Activated T-helper 2 cell treated with anti-CD3 and anti-CD28 coated beads, Interferon-gamma antibody, Interleukin-2, Interleukin-4, amounts not matched to agents 10 μg/mL and 5 μg/mL and 100 μg/mL, durations not matched to agents 14 hours and 24 hours and 36 hours (primary cell): ENCODE measurements at regions of chr12 and their contacts with region 1.

Region 1: GRCh38 chr12:44015335-44015941 is 179.6 kb downstream of the TMEM117 start:
- DNase-seq: no peak
- H3K4me3 Mint-ChIP-seq: no peak overlapping the region
- H3K27ac Mint-ChIP-seq: no peak overlapping the region
- H3K4me1 Mint-ChIP-seq: no peaks in the 10 kb centered on the region
- H3K27me3 Mint-ChIP-seq: no peaks in the 10 kb centered on the region

Region 2: DNA sequence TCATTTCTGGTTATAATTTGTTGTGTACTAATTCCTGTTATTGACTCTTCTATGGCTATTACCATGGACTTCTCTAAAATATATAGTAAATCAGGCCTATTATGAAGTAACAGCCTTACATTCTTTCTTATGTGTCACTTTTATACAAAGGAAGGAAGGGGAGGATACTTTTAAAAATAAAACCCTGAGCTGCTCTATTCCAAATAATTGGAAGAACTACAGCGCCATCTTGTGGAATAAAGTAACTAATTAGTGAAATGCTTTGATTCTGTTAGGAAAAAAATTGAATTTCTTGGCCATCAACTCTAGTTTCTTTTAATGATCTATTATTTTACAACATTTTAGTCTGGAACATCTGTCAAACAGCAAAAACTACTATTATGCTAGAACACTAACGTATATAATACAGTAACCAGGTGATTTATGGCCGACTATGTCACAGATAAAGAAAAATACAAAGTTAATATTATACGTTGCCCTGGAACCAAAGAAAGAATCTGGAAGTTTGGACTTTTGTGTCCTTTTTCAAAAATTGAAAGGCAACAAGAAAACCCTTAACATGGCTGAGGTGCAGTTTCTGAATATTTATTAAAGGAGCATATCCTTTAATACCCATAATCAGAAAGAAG is 915.6 kb after region 1 on chr12:
- intact Hi-C with region 1: loop called (anchors 5 kb)
- DNase-seq: no peak
- H3K4me3 Mint-ChIP-seq: no peak overlapping the region
- H3K27ac Mint-ChIP-seq: no peak overlapping the region
- H3K4me1 Mint-ChIP-seq: peaks cover 1% of the 10 kb centered on the region
- H3K27me3 Mint-ChIP-seq: no peaks in the 10 kb centered on the region

Region 3: GRCh38 chr12:44942714-44943113 is 927.3 kb after region 1 on chr12:
- intact Hi-C with region 1: loop called (anchors 5 kb)
- DNase-seq: no peak
- H3K4me3 Mint-ChIP-seq: no peak overlapping the region
- H3K27ac Mint-ChIP-seq: no peak overlapping the region
- H3K4me1 Mint-ChIP-seq: no peaks in the 10 kb centered on the region
- H3K27me3 Mint-ChIP-seq: peaks cover 6% of the 10 kb centered on the region